ENCODE measurements at regions of chr3 and their contacts with region 1.

Region 1: GRCh38 chr3:109396806-109397205 is 59.5 kb upstream of the DPPA4 start:
- DNase-seq: no peak
- H3K4me3 Mint-ChIP-seq: no peak overlapping the region
- H3K27ac Mint-ChIP-seq: no peak overlapping the region
- H3K4me1 Mint-ChIP-seq: peaks cover 7% of the 10 kb centered on the region
- H3K27me3 Mint-ChIP-seq: no peaks in the 10 kb centered on the region
- CTCF ChIP-seq: no peak

Region 2: DNA sequence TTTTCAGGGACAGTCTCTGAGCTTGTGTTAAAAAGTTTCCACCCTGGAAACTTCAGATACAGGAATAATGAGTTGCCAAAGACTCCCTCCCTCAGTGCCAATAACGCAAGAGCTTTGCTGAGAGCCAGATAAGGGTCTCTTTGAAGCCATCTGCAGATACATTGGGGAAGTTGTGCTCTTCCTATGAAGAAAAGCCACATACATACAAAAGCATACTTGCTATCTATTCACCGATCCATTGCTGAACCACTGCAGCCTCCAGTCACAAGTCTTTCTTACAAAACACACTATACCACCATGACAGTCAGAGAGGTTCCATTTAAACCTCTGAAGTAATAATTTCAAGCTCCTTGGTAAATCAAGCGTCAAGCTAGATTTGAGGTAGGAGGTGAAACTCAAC is 629.6 kb before region 1 on chr3:
- CTCF ChIA-PET with region 1: no interaction called
- intact Hi-C with region 1: no loop called
- DNase-seq: no peak
- H3K4me3 Mint-ChIP-seq: no peak overlapping the region
- H3K27ac Mint-ChIP-seq: no peak overlapping the region
- H3K4me1 Mint-ChIP-seq: no peaks in the 10 kb centered on the region
- H3K27me3 Mint-ChIP-seq: peaks cover 29% of the 10 kb centered on the region
- CTCF ChIP-seq: no peak

Region 3: GRCh38 chr3:109023656-109024254 is 373.1 kb before region 1 on chr3:
- CTCF ChIA-PET with region 1: interaction called, 11 read pairs
- intact Hi-C with region 1: no loop called
- DNase-seq: peak; percentile 49
- H3K4me3 Mint-ChIP-seq: no peak overlapping the region
- H3K27ac Mint-ChIP-seq: no peak overlapping the region
- H3K4me1 Mint-ChIP-seq: no peaks in the 10 kb centered on the region
- H3K27me3 Mint-ChIP-seq: peaks cover 8% of the 10 kb centered on the region
- CTCF ChIP-seq: no peak

Region 4: GRCh38 chr3:109050591-109051167 is 346.1 kb before region 1 on chr3:
- CTCF ChIA-PET with region 1: no interaction called
- intact Hi-C with region 1: loop called (anchors 10 kb)
- DNase-seq: peak; percentile 41
- H3K4me3 Mint-ChIP-seq: no peak overlapping the region
- H3K27ac Mint-ChIP-seq: no peak overlapping the region
- H3K4me1 Mint-ChIP-seq: peaks cover 7% of the 10 kb centered on the region
- H3K27me3 Mint-ChIP-seq: no peaks in the 10 kb centered on the region
- CTCF ChIP-seq: peak; percentile 51

Region 5: GRCh38 chr3:109275702-109276293 is 121.0 kb before region 1 on chr3:
- CTCF ChIA-PET with region 1: interaction called, 14 read pairs
- intact Hi-C with region 1: loop called (anchors 1 kb)
- DNase-seq: peak; percentile 66
- H3K4me3 Mint-ChIP-seq: no peak overlapping the region
- H3K27ac Mint-ChIP-seq: no peak overlapping the region
- H3K4me1 Mint-ChIP-seq: peaks cover 8% of the 10 kb centered on the region
- H3K27me3 Mint-ChIP-seq: no peaks in the 10 kb centered on the region
- CTCF ChIP-seq: peak; percentile 66

Measured in Calu3 (cell line).